ENCODE measurements at regions of chr11 and their contacts with region 1.

Region 1: DNA sequence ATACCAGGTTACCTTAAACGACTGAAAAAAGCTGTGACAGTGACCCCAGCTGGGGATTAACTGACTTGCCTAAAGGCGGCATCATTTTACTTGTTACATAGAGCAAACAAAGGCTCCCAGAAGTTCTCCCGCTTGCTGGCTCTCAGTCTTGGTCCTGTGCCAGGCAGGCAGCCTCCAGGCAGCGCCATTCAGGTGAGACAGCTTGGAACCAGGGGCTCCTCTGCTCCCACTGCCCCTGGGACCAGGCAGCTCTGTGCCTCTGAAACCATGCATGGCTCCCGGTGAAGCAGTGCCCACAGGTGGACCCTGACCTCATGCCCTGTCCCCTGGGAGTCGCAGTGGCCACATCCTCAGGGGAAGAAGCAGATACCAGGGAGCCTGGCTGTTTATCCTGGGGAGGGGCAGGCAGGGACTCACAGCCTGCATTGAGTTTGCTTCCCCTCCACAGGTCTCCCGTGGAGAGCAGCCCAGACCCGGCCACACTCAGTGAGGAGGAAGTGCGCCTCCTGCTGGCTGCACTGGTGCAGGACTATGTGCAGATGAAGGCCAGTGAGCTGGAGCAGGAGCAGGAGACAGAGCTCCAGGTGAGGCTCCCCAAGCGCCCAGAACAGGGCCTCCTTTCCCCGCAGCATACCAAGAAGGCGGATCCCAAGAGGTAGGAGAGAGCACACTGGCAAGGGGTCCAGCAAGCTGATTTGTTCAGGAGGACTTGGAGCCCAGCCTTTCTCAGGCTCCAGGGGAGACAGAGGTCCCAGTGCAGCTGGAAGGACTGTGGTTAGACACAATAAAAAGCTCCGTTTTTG is 15.6 kb upstream of the CYP2R1 start:
- DNase-seq: peak; percentile 89
- H3K4me3 Mint-ChIP-seq: peak overlapping the region; percentile 15
- H3K27ac Mint-ChIP-seq: peak overlapping the region; percentile 45
- H3K4me1 Mint-ChIP-seq: peaks cover 54% of the 10 kb centered on the region
- H3K27me3 Mint-ChIP-seq: no peaks in the 10 kb centered on the region

Region 2: GRCh38 chr11:14537134-14537599 is 370.4 kb before region 1 on chr11:
- CTCF ChIA-PET with region 1: interaction called, 14 read pairs
- DNase-seq: peak; percentile 62
- H3K4me3 Mint-ChIP-seq: peak overlapping the region; percentile 46
- H3K27ac Mint-ChIP-seq: peak overlapping the region; percentile 84
- H3K4me1 Mint-ChIP-seq: peaks cover 49% of the 10 kb centered on the region
- H3K27me3 Mint-ChIP-seq: no peaks in the 10 kb centered on the region

Region 3: DNA sequence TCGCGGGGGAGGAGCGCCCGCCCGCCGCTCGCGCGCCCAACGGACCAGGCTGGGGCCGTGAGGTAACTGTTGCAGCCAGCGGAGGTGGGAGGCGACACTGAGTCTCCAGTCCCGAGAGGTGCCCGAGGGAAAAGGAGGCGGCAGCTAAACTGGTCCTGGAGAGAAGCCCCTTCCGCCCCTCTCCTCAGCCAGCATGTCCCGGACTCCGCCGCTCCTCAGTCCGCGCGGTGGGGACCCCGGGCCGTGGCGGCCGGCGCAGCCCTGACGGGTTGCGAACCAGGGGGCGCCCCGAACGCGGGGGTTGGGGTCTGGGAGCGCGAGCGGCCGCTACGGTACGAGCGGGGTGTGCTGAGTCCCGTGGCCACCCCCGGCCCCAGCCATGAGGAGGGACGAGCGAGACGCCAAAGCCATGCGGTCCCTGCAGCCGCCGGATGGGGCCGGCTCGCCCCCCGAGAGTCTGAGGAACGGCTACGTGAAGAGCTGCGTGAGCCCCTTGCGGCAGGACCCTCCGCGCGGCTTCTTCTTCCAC is 263.9 kb before region 1 on chr11 and contains the start of gene PDE3B:
- CTCF ChIA-PET with region 1: interaction called, 23 read pairs
- DNase-seq: peak; percentile 88
- H3K4me3 Mint-ChIP-seq: peak within 1 kb of the TSS; percentile 76
- H3K27ac Mint-ChIP-seq: peak within 1 kb of the TSS; percentile 89
- H3K4me1 Mint-ChIP-seq: peaks cover 45% of the 10 kb centered on the region
- H3K27me3 Mint-ChIP-seq: no peaks in the 10 kb centered on the region

Region 4: GRCh38 chr11:14974515-14975251 is 67.1 kb after region 1 on chr11:
- CTCF ChIA-PET with region 1: interaction called, 27 read pairs
- DNase-seq: peak; percentile 76
- H3K4me3 Mint-ChIP-seq: peak overlapping the region; percentile 29
- H3K27ac Mint-ChIP-seq: no peak overlapping the region
- H3K4me1 Mint-ChIP-seq: peaks cover 32% of the 10 kb centered on the region
- H3K27me3 Mint-ChIP-seq: peaks cover 82% of the 10 kb centered on the region

Region 5: DNA sequence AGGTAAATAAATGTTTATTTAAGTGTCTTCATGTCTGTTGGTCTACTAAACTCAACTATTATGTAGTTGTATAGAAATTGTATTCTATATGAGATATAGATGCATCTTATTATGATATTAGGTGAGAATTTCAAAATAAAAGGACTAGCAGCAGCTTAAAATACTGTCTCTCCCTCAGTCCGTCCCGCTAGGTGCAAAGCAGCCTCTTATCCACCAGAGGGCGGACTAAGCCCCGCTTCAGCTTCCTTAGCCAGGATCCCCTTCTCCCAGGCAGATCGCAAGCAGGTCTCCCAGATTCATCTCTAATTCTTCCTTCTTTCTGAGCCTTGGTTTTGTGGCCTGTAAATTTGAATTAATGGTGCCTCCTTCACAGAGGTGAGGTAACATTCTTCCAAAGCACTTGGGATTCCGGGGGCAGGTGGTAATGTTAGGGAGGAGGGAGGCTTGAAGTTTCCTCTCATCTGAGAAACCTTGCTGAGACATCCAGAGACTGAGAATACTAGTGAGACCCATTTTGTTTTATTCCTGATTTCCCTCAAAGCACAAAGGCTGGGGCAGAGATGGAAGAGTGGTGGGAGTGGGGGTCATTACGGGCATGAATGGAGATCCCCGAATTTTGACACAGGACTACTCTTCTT is 193.6 kb after region 1 on chr11:
- CTCF ChIA-PET with region 1: interaction called, 18 read pairs
- DNase-seq: peak; percentile 70
- H3K4me3 Mint-ChIP-seq: no peak overlapping the region
- H3K27ac Mint-ChIP-seq: no peak overlapping the region
- H3K4me1 Mint-ChIP-seq: no peaks in the 10 kb centered on the region
- H3K27me3 Mint-ChIP-seq: peaks cover 34% of the 10 kb centered on the region

Measured in activated naive CD4-positive, alpha-beta T cell treated with anti-CD3 and anti-CD28 coated beads, Interleukin-2, amount 10 ng/mL, durations not matched to agents 7 days and 5 days (primary cell).